Naive thymus-derived CD4-positive, alpha-beta T cell (primary cell): ENCODE measurements at regions of chr14 and their contacts with region 1.

Region 1: DNA sequence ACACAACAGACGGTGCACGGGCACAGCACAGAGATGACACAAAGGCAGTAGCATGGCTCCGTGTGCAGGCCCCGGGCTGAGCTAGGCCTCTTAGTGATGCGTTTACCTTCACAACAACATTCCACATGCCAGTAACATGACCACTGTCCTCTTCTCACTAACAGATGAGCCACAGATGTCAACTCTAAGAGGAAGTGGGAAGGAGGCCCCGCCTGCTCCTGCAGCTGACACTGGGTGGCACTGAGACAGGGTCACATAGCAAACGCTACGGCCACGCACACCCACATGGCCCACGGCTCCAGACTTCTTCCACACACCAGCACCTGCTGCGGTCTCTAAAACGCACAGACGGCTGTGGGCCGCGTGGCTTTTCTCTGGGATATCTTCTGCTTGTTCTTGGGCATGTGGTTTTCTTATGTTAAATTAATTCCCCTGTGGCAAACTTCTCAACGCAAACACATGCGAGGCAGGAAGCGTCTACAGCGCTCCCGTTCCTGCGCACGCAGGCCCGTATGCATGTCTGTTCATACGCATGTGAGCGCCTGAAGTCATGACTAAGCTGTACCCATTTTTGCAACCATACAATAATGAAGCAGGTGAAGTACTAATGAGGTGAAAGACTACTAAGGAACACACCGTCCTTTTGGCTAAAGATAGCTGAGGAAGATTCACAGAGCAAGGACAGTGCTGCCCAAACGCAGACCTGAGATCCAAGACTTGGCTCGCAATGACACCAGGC is 26.8 kb downstream of the AMN start:
- DNase-seq: peak in 7 of 9 donors; percentile 48 to 82 (median 77)
- ATAC-seq: peak; percentile 81
- H3K4me3 ChIP-seq: no peak overlapping the region
- H3K4me3 Mint-ChIP-seq: peak overlapping the region; percentile 30 to 77 (median 62)
- H3K27ac ChIP-seq: peak overlapping the region; percentile 46
- H3K27ac Mint-ChIP-seq: peak overlapping the region; percentile 59 to 98 (median 91)
- H3K4me1 ChIP-seq: peaks cover 0 to 17% of the 10 kb centered on the region in 2 donors
- H3K4me1 Mint-ChIP-seq: peaks cover 14 to 31% (median 28%) of the 10 kb centered on the region in 7 donors
- H3K27me3 ChIP-seq: no peaks in the 10 kb centered on the region
- H3K27me3 Mint-ChIP-seq: no peaks in the 10 kb centered on the region

Region 2: DNA sequence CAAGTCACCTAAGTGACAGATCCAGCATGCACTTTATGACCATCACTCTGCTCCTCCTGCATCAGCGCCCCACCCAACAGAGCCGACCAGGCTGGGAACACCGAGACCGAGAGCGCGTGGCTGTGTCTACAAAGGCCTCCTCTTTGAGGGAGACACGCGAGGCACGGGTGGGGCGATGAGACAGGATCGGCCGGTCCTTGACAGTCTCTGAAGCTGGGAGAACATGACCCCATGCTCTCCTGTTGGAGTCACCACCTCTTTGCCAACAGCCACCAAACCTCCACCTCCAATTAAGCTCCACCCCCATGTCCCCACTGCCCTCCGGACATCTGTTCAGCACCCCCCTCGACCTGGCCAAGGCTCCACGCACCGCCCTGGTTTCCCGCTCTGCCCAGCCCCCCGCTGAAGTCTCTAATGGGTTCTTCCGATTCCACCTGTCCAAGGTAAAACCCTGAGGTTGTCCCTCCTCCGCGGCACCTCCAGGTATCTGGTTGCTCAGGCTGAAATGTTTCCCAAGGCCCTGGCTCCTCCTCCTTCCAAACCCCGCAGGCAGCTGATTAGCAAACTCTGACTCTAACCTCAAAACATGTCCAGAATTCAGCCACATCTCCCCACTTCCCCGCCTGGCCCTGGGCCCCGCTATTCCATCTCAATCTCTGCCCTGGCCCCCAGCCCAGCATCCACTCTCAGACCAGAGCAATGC is 893.9 kb before region 1 on chr14:
- CTCF ChIA-PET with region 1: no interaction called
- POLR2A ChIA-PET with region 1: no interaction called
- intact Hi-C with region 1: no loop called
- DNase-seq: no peak
- ATAC-seq: no peak
- H3K4me3 ChIP-seq: no peak overlapping the region
- H3K4me3 Mint-ChIP-seq: no peak overlapping the region
- H3K27ac ChIP-seq: no peak overlapping the region
- H3K27ac Mint-ChIP-seq: peak overlapping the region in 6 of 9 donors; percentile 13 to 80 (median 66)
- H3K4me1 ChIP-seq: peaks cover 0 to 23% of the 10 kb centered on the region in 2 donors
- H3K4me1 Mint-ChIP-seq: peaks cover 0 to 10% (median 3%) of the 10 kb centered on the region in 7 donors
- H3K27me3 ChIP-seq: no peaks in the 10 kb centered on the region
- H3K27me3 Mint-ChIP-seq: no peaks in the 10 kb centered on the region

Region 3: GRCh38 chr14:102272392-102272791 is 676.8 kb before region 1 on chr14:
- CTCF ChIA-PET with region 1: no interaction called
- POLR2A ChIA-PET with region 1: no interaction called
- intact Hi-C with region 1: no loop called
- DNase-seq: no peak
- ATAC-seq: no peak
- H3K4me3 ChIP-seq: no peak overlapping the region
- H3K4me3 Mint-ChIP-seq: no peak overlapping the region
- H3K27ac ChIP-seq: no peak overlapping the region
- H3K27ac Mint-ChIP-seq: no peak overlapping the region
- H3K4me1 ChIP-seq: no peaks in the 10 kb centered on the region
- H3K4me1 Mint-ChIP-seq: no peaks in the 10 kb centered on the region
- H3K27me3 ChIP-seq: no peaks in the 10 kb centered on the region
- H3K27me3 Mint-ChIP-seq: peaks cover 0 to 7% (median 0%) of the 10 kb centered on the region in 5 donors

Region 4: GRCh38 chr14:102928412-102929240 is 20.6 kb before region 1 on chr14:
- CTCF ChIA-PET with region 1: interaction called, 3 read pairs
- POLR2A ChIA-PET with region 1: interaction called, 6 read pairs
- intact Hi-C with region 1: loop called in 1 of 2 experiments (anchors 1 kb)
- DNase-seq: peak; percentile 58 to 83 (median 78)
- ATAC-seq: peak; percentile 87
- H3K4me3 ChIP-seq: peak overlapping the region; percentile 56
- H3K4me3 Mint-ChIP-seq: peak overlapping the region; percentile 73 to 85 (median 78)
- H3K27ac ChIP-seq: no peak overlapping the region
- H3K27ac Mint-ChIP-seq: peak overlapping the region in 4 of 9 donors; percentile 39 to 79 (median 50)
- H3K4me1 ChIP-seq: peaks cover 11 to 27% of the 10 kb centered on the region in 2 donors
- H3K4me1 Mint-ChIP-seq: peaks cover 4 to 19% (median 6%) of the 10 kb centered on the region in 7 donors
- H3K27me3 ChIP-seq: no peaks in the 10 kb centered on the region
- H3K27me3 Mint-ChIP-seq: peaks cover 0 to 57% (median 11%) of the 10 kb centered on the region in 5 donors

Region 5: DNA sequence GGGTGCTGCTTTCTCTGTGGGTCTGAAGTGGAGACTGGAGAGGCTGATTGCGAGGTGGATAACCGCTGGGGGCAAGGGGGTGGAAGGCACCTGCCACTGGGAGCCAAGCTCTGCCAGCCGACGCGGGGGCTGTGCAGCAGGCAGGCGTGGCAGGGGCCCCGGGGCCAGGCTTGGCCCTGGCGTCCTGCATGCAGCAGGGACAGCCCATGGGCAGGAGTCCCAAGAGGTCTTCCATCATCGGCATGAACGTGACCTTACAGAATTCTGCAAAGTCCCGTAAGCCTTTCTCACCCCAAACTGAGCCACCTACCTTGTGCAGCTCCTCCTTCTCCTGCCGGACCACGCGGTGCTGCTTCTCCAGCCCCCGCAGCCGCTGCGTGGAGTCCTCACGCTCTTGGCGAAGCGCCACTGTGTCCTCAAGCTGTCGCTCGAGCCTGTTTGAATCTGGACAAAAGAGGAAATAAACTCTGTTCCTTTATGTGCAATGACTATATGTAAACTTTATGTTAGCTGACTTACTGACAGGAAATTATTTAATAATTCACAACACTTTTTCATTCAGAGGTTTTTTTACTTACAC is 24.6 kb after region 1 on chr14:
- CTCF ChIA-PET with region 1: no interaction called
- POLR2A ChIA-PET with region 1: no interaction called
- intact Hi-C with region 1: loop called in 1 of 2 experiments (anchors 2 kb)
- DNase-seq: no peak
- ATAC-seq: no peak
- H3K4me3 ChIP-seq: no peak overlapping the region
- H3K4me3 Mint-ChIP-seq: no peak overlapping the region
- H3K27ac ChIP-seq: no peak overlapping the region
- H3K27ac Mint-ChIP-seq: peak overlapping the region in 1 of 9 donors; percentile 14
- H3K4me1 ChIP-seq: no peaks in the 10 kb centered on the region
- H3K4me1 Mint-ChIP-seq: no peaks in the 10 kb centered on the region
- H3K27me3 ChIP-seq: no peaks in the 10 kb centered on the region
- H3K27me3 Mint-ChIP-seq: no peaks in the 10 kb centered on the region